A549 (cell line): ENCODE measurements at regions of chr15 and their contacts with region 1.

Region 1: DNA sequence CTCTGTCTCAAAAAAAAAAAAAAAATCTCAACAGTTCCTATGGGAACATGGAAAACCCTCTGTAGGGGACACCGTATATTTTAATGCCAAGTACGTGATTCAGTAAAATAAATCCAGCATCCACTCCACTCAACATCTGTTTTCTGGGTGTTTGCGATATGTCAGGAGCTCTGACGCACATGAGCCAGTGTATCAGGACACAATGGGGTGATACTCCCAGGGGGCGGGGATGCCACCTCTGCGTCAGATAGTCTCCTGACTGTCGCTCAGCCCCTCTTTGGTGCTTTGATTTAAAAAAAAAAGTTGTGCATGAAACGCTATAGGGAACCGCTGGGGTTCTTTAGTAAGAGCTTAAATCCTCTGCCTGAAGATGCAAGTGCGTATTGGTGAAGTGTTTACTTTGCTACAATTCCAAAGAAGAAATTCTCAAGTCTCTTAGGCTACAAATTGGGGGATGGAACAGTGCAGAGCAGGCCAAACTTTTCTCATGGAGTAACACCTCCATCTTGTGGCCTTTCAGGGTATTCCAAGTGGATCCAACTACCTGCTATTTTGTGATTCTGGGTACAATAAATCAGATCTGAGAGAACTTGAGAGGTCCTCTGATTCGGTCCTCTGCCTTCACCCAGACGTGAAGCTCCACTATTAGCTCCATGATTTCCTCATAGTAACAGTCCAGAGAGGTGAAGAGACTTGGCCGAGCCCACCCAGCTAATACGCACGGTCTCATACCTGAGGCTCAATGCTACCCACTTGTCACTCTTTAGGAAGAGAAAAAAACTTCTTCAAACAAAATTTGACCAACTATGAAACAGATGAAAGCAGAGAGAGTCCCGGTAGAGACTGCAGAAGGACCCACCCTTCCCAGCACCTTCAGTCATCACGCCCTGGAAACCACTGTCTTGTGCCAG is 9.3 kb upstream of the NR2E3 start:
- DNase-seq: peak; percentile 91 to 96
- ATAC-seq: peak; percentile 91 to 97
- H3K4me3 ChIP-seq: no peak overlapping the region
- H3K27ac ChIP-seq: peak overlapping the region; percentile 84
- H3K4me1 ChIP-seq: peaks cover 45% of the 10 kb centered on the region
- CTCF ChIP-seq: peak; percentile 98
- EP300 ChIP-seq: peak; percentile 95 to 97
- POLR2A ChIP-seq: no peak
- RAD21 ChIP-seq: peak; percentile 99

Region 2: GRCh38 chr15:71366926-71367325 is 434.2 kb before region 1 on chr15:
- CTCF ChIA-PET with region 1: no interaction called
- POLR2A ChIA-PET with region 1: no interaction called
- DNase-seq: peak in 1 of 2 experiments; percentile 28
- ATAC-seq: no peak
- H3K4me3 ChIP-seq: no peak overlapping the region
- H3K27ac ChIP-seq: no peak overlapping the region
- H3K4me1 ChIP-seq: no peaks in the 10 kb centered on the region
- CTCF ChIP-seq: no peak
- EP300 ChIP-seq: no peak
- POLR2A ChIP-seq: no peak
- RAD21 ChIP-seq: no peak

Region 3: DNA sequence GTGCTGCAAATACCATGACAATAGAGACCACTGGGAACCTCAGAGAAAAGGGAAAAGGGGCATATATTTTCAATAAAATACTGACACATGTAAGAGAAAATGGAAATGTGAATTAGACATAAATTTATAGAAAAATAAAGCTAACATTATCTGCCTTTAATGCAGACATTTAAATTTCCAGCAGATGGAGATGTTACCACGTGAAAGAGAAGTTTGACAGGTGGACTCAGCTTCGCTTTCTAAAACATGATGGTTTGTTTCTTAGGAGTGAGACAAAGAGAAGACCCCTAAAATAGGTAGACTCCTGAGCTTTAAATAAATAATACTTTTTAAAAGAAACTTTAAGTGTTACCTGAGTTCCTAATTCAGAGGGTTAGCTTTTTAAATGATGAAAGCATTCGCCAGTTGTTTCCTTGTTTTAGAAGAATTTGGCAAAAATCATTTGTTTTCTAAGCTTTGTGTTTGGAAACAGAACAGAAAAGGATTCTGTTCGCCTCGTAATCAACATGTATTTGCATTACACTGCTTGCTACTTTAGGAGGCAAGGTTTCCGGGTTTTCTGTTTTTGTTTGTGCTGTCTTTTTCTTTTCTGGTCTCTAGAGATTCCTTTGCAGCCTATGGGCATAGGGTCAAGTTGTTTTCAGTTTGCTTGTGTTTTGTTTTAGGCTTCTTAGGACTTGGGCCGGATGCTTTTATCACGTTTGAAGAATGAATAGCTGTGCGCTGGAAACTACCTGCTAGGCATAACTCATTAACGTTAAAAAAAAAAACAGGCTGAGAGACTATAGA is 414.4 kb before region 1 on chr15:
- CTCF ChIA-PET with region 1: interaction called, 49 read pairs
- POLR2A ChIA-PET with region 1: no interaction called
- DNase-seq: peak in 1 of 2 experiments; percentile 56
- ATAC-seq: peak; percentile 54 to 66; a peak in 4 of 6 replicates
- H3K4me3 ChIP-seq: no peak overlapping the region
- H3K27ac ChIP-seq: peak overlapping the region; percentile 60 to 69
- H3K4me1 ChIP-seq: peaks cover 40% of the 10 kb centered on the region
- CTCF ChIP-seq: peak; percentile 83
- EP300 ChIP-seq: no peak
- POLR2A ChIP-seq: no peak
- RAD21 ChIP-seq: peak; percentile 84 to 89

Region 4: GRCh38 chr15:71547011-71547410 is 254.1 kb before region 1 on chr15:
- CTCF ChIA-PET with region 1: no interaction called
- POLR2A ChIA-PET with region 1: no interaction called
- DNase-seq: no peak
- ATAC-seq: no peak
- H3K4me3 ChIP-seq: no peak overlapping the region
- H3K27ac ChIP-seq: no peak overlapping the region
- H3K4me1 ChIP-seq: no peaks in the 10 kb centered on the region
- CTCF ChIP-seq: no peak
- EP300 ChIP-seq: no peak
- POLR2A ChIP-seq: no peak
- RAD21 ChIP-seq: no peak

Region 5: DNA sequence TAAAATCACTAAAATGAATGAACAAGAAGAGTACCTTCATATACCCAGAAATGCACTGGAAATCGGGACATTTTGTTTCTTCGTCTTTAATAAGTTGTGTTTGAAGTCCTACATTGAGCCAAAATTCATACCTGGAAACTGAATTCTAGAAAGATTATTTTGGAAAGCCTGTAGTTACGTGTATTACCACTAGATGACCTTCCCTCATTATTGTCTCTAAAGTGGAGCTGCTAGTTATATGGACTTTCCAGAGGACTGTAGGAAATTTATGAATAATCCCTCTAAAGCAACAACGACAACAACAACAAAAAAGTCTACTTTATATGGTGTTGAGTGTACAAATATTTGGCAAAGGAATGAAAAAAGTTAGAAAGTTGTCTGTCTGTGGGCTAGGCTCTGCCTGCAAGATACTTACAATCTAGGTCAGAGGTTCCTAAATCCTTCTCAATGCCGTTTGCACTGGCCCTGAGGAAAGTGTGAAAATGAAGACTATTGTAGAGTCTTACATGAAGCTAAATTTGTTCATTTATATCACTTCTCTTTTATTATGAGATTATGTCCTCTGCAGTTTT is 225.5 kb before region 1 on chr15:
- CTCF ChIA-PET with region 1: interaction called, 11 read pairs
- POLR2A ChIA-PET with region 1: no interaction called
- DNase-seq: peak; percentile 25 to 30
- ATAC-seq: peak in 1 of 2 experiments; percentile 57; a peak in 3 of 6 replicates
- H3K4me3 ChIP-seq: no peak overlapping the region
- H3K27ac ChIP-seq: no peak overlapping the region
- H3K4me1 ChIP-seq: peaks cover 24% of the 10 kb centered on the region
- CTCF ChIP-seq: peak; percentile 78
- EP300 ChIP-seq: no peak
- POLR2A ChIP-seq: no peak
- RAD21 ChIP-seq: peak; percentile 71 to 79

Region 6: GRCh38 chr15:71743861-71744382 is 57.2 kb before region 1 on chr15:
- CTCF ChIA-PET with region 1: interaction called, 522 read pairs
- POLR2A ChIA-PET with region 1: no interaction called
- DNase-seq: peak in 1 of 2 experiments; percentile 73
- ATAC-seq: no peak
- H3K4me3 ChIP-seq: no peak overlapping the region
- H3K27ac ChIP-seq: peak overlapping the region; percentile 89 to 99
- H3K4me1 ChIP-seq: peaks cover 52% of the 10 kb centered on the region
- CTCF ChIP-seq: peak; percentile 96
- EP300 ChIP-seq: no peak
- POLR2A ChIP-seq: no peak
- RAD21 ChIP-seq: peak; percentile 78 to 80

Region 7: GRCh38 chr15:71773206-71773859 is 27.8 kb before region 1 on chr15:
- CTCF ChIA-PET with region 1: interaction called, 87 read pairs
- POLR2A ChIA-PET with region 1: no interaction called
- DNase-seq: no peak
- ATAC-seq: no peak
- H3K4me3 ChIP-seq: no peak overlapping the region
- H3K27ac ChIP-seq: no peak overlapping the region
- H3K4me1 ChIP-seq: peaks cover 6% of the 10 kb centered on the region; the same call in 2 of the 3 replicates
- CTCF ChIP-seq: no peak
- EP300 ChIP-seq: no peak
- POLR2A ChIP-seq: no peak
- RAD21 ChIP-seq: no peak

Region 8: DNA sequence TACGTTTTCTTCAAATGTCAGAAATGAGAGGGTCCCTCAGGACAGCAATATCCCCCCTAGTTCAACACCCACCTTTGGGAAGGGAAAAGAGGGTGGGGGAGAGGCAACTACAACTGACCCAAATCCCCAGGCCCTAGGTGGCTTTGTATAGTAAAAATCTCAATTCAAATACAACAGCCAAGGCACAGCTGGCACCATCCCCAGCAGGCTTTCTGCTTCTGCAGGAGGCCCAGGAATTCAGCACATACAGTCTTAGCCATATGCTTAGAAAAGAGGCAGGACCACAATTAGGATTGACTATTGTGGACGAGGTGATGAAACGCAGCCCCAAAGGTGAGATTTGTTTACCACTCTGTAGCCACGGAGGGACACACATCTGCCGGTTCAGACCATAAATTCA is 25.1 kb after region 1 on chr15:
- CTCF ChIA-PET with region 1: interaction called, 13 read pairs
- POLR2A ChIA-PET with region 1: no interaction called
- DNase-seq: no peak
- ATAC-seq: no peak
- H3K4me3 ChIP-seq: no peak overlapping the region
- H3K27ac ChIP-seq: no peak overlapping the region
- H3K4me1 ChIP-seq: no peaks in the 10 kb centered on the region
- CTCF ChIP-seq: no peak
- EP300 ChIP-seq: no peak
- POLR2A ChIP-seq: no peak
- RAD21 ChIP-seq: no peak

Region 9: GRCh38 chr15:72009222-72009621 is 208.1 kb after region 1 on chr15:
- CTCF ChIA-PET with region 1: no interaction called
- POLR2A ChIA-PET with region 1: no interaction called
- DNase-seq: peak in 1 of 2 experiments; percentile 44
- ATAC-seq: peak in 1 of 2 experiments; percentile 75; a peak in 2 of 6 replicates
- H3K4me3 ChIP-seq: no peak overlapping the region
- H3K27ac ChIP-seq: peak overlapping the region in 1 of 2 experiments; percentile 49; a peak in 2 of 6 replicates
- H3K4me1 ChIP-seq: peaks cover 12% of the 10 kb centered on the region
- CTCF ChIP-seq: no peak
- EP300 ChIP-seq: no peak
- POLR2A ChIP-seq: no peak
- RAD21 ChIP-seq: no peak

Region 10: GRCh38 chr15:72155635-72156616 is 354.8 kb after region 1 on chr15:
- CTCF ChIA-PET with region 1: interaction called, 40 read pairs
- POLR2A ChIA-PET with region 1: no interaction called
- DNase-seq: peak; percentile 87 to 96
- ATAC-seq: peak; percentile 94 to 97
- H3K4me3 ChIP-seq: peak overlapping the region; percentile 39
- H3K27ac ChIP-seq: peak overlapping the region; percentile 73 to 81
- H3K4me1 ChIP-seq: peaks cover 21% of the 10 kb centered on the region
- CTCF ChIP-seq: peak; percentile 99
- EP300 ChIP-seq: no peak
- POLR2A ChIP-seq: no peak
- RAD21 ChIP-seq: peak; percentile 100